Activated T-helper 1 cell treated with anti-CD3 and anti-CD28 coated beads, Interleukin-12 subunit alpha, Interleukin-12 subunit beta, Interleukin-2, Interleukin-4 antibody, amounts not matched to agents 30 ng/mL and 10 ng/mL and 1 ng/mL, durations not matched to agents 14 hours and 24 hours and 36 hours (primary cell): ENCODE measurements at regions of chr5 and their contacts with region 1.

Region 1: DNA sequence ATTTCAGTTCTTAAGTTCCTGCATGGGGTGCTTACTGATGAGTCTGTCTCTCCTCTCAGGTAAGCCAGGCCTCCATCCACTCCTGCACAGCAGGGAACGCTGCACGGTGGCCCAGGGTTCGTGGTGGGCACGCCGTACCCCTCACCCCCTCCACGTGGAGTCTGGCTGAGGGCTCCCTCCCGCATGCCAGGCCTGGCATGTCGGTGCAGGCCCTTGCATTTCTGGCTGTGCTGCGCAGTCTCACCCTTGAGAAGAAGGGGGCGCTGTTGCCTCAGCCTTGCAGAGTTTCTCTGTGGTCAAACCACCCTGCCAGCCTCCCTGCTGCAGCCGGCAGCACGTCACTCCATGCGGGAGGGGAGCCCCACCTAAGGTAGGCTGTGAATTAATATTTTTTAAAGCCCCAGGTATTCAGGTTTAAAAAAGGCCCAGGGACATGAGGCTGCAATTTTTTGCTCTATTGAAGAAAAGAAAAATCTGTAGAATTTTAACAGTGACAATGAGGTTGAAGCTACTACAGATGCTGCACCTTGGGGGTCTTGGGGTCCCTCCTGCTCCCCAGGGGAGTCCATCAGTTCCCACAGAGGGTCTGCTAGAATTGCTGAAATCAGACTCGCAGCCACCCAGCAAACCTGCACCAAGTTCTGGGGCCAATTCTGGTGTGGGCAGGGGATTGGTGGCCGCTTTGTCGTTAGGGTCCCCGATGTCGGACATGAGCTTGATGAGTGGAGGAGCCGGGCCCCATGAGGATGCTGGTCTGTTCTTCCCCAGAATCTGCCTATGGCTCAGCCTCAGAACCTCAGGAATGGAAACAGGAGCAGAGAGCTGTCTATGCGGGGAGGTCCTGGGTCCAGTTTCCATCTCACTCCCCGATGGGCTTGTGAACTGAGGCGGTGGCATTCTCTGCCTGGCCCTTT is 52.6 kb downstream of the TENT4A start:
- DNase-seq: peak; percentile 63
- H3K4me3 Mint-ChIP-seq: no peak overlapping the region
- H3K27ac Mint-ChIP-seq: peak overlapping the region; percentile 34
- H3K4me1 Mint-ChIP-seq: peaks cover 5% of the 10 kb centered on the region
- H3K27me3 Mint-ChIP-seq: no peaks in the 10 kb centered on the region

Region 2: DNA sequence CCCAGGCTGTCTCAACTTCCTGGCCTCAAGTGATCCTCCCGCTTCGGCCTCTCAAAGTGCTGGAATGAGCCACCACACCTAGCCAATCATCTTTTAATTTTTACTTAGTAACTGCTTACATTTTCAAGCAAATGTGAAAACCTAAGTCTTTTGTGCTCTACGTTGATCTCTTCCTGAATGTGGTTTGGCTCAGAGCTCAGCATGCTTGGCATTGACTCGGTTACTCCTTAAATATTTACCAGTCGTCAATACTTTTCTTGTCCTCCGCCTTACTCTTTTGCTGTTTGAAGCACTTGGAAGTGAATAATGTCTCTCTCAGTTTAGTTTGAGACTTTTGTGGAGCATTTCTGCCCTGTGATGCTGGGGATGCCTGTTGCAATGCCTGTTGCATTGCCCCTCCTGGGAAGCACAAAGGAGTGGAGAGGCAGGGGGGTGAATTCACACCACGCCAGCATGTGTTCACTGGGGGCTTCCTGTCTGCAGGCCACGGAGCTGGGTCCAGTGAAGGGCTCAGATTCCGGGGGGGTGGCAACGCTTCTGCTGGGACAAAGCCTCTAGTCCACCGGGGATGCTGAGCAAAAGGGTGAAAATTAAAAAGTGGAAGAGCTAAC is 65.7 kb before region 1 on chr5:
- intact Hi-C with region 1: no loop called
- DNase-seq: no peak
- H3K4me3 Mint-ChIP-seq: no peak overlapping the region
- H3K27ac Mint-ChIP-seq: no peak overlapping the region
- H3K4me1 Mint-ChIP-seq: peaks cover 5% of the 10 kb centered on the region
- H3K27me3 Mint-ChIP-seq: peaks cover 17% of the 10 kb centered on the region

Region 3: DNA sequence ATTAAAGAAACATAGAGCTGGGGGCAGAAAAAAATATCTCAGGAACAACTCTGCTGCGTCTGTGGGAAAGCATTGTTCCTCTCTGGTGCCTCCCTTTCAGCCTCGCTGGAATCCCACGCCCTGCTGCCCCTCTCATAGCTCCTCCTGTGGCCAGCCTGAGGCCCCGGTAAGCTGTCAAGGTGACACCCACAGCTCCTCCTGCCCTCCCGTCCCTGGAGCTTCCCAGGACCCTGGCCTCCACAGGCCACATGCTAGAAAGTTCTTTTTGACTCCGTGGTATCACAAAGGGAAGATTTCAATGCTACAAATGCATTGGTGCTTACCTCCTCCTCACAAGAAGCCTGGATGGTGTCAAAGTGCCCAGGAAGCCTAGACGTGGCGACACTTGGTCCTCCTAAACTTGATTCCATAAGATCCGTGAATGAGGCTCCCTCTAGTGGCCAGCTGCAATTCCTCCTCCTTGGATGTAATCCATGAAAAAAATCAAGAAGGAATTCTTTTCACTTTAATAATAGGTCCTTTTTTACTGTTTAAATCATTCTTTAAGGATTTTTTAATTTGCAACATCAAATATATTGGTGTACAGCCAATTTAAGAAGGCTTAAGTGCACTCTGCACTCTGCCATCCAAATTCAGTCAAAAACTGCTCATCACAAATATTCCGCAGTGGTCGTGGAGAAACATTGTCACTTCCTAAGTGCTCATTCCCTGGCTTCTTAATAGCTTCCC is 980.2 kb after region 1 on chr5:
- intact Hi-C with region 1: loop called (anchors 1 kb)
- DNase-seq: peak; percentile 4
- H3K4me3 Mint-ChIP-seq: no peak overlapping the region
- H3K27ac Mint-ChIP-seq: no peak overlapping the region
- H3K4me1 Mint-ChIP-seq: no peaks in the 10 kb centered on the region
- H3K27me3 Mint-ChIP-seq: no peaks in the 10 kb centered on the region